ENCODE measurements at regions of chr1 and their contacts with region 1.

Region 1: DNA sequence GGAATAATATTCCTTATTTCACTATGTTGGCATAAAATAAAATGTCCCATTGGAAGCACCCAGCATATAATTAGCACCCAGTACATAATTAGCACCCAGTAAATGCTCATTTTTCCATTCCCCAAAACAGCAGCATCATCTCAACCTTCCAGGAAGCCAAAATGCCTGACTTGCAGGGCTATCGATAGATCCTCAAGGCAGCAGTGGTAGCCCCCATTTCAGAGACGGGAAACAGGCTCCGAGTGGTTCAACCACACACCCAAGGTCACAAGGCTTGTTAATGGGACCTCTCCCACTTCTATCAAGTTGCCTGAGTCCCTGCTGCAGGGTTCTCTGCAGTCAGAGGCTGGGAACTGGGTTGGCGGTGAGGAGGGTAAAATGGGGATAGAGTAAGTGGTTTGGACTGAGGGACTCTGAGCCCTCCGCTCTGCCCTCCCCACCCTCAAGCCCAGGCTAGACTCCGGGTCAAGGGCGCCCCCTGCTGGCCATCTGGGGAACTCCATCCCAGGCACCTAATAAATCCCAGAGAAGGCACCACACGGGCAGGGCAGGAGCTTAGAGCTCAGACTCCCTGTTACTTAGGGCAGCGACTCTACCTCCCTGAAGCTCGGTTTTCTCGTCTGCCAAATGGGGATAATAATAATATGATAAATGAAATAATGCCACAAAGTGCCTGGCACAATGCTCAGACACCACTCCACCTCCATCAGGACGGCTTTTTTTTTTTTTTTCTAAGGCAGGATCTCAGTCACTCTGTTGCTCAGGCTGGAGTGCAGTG is 21.9 kb upstream of the LAPTM5 start:
- DNase-seq: peak; percentile 97
- H3K4me3 ChIP-seq: no peak overlapping the region
- H3K27ac ChIP-seq: no peak overlapping the region
- H3K4me1 ChIP-seq: peaks cover 6 to 22% (median 11%) of the 10 kb centered on the region in 4 donors
- H3K27me3 ChIP-seq: peaks cover 0 to 8% (median 0%) of the 10 kb centered on the region in 4 donors
- CTCF ChIP-seq: peak; percentile 96 to 100 (median 97)
- EP300 ChIP-seq: no peak
- POLR2A ChIP-seq: no peak

Region 2: GRCh38 chr1:29230553-29231378 is 1548.7 kb before region 1 on chr1 and contains the start of gene MECR:
- intact Hi-C with region 1: loop called (anchors 10 kb)
- DNase-seq: peak; percentile 99
- H3K4me3 ChIP-seq: peak within 1 kb of the TSS; percentile 69 to 85 (median 84)
- H3K27ac ChIP-seq: peak within 1 kb of the TSS; percentile 77 to 87 (median 78)
- H3K4me1 ChIP-seq: peaks cover 10 to 24% (median 18%) of the 10 kb centered on the region in 4 donors
- H3K27me3 ChIP-seq: peaks cover 0 to 5% (median 0%) of the 10 kb centered on the region in 4 donors
- CTCF ChIP-seq: peak; percentile 12 to 39 (median 22)
- EP300 ChIP-seq: no peak
- POLR2A ChIP-seq: peak; percentile 11
- total RNA-seq, gene MECR: 15.4 to 20.2 (median 18.6) TPM

Region 3: GRCh38 chr1:30657759-30658253 is 121.7 kb before region 1 on chr1:
- intact Hi-C with region 1: no loop called
- DNase-seq: no peak
- H3K4me3 ChIP-seq: no peak overlapping the region
- H3K27ac ChIP-seq: no peak overlapping the region
- H3K4me1 ChIP-seq: no peaks in the 10 kb centered on the region
- H3K27me3 ChIP-seq: peaks cover 0 to 31% (median 3%) of the 10 kb centered on the region in 4 donors
- CTCF ChIP-seq: no peak
- EP300 ChIP-seq: no peak
- POLR2A ChIP-seq: no peak

Region 4: GRCh38 chr1:30718636-30719405 is 60.7 kb before region 1 on chr1:
- intact Hi-C with region 1: loop called (anchors 1 kb)
- DNase-seq: peak; percentile 96
- H3K4me3 ChIP-seq: peak overlapping the region; percentile 60 to 75 (median 68)
- H3K27ac ChIP-seq: peak overlapping the region; percentile 95 to 100 (median 100)
- H3K4me1 ChIP-seq: peaks cover 10 to 22% (median 17%) of the 10 kb centered on the region in 4 donors
- H3K27me3 ChIP-seq: no peaks in the 10 kb centered on the region
- CTCF ChIP-seq: peak in 2 of 3 experiments; percentile 97 to 99
- EP300 ChIP-seq: no peak
- POLR2A ChIP-seq: peak; percentile 59

Region 5: DNA sequence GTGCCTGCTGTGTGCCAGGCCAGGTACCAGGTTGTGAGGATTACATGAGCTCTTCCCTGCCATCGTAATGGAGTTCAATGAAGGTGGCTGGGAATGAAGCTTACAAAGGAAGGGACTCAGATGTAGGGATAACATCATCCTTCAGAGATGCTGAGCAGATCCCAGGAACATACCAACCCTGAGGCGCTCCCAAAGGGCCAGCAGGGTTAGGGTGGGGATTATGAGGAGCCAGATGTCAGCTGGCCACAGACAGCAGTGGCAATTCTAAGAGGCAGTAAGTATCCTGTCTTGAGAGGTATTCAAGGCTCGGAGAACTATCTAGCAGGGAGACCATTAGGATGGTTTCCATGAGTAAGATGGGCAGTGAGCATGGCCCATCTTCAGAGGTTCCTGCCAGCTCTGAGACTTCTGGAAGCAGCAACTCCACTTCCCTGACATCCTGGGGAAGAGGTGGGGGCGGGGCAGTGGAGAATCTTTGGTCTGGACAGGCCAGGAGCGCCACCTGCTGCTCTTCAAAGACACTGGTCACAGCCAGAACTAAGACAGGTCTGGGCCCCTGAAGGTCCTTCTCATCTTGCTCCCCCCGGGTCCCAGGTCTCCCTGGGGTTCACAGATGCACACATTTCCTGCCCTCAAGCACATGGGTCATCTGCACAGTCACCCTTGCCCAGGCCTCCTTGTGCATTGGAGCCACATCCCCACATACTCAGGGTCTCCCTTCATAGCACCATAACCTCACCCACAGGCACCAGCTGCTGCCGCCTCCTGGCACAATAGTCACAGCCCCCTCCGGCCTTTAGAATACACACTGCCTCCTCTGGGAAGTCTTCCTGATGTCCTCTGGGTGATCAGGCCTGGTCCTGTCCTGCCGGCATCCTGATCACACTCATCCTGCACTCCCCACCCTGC is 131.8 kb after region 1 on chr1:
- intact Hi-C with region 1: loop called (anchors 5 kb)
- DNase-seq: no peak
- H3K4me3 ChIP-seq: no peak overlapping the region
- H3K27ac ChIP-seq: peak overlapping the region in 3 of 4 donors; percentile 31 to 38 (median 32)
- H3K4me1 ChIP-seq: peaks cover 18 to 41% (median 40%) of the 10 kb centered on the region in 4 donors
- H3K27me3 ChIP-seq: no peaks in the 10 kb centered on the region
- CTCF ChIP-seq: peak; percentile 89 to 94 (median 93)
- EP300 ChIP-seq: no peak
- POLR2A ChIP-seq: no peak

Region 6: GRCh38 chr1:31084782-31085569 is 305.5 kb after region 1 on chr1:
- intact Hi-C with region 1: no loop called
- DNase-seq: no peak
- H3K4me3 ChIP-seq: no peak overlapping the region
- H3K27ac ChIP-seq: no peak overlapping the region
- H3K4me1 ChIP-seq: no peaks in the 10 kb centered on the region
- H3K27me3 ChIP-seq: no peaks in the 10 kb centered on the region
- CTCF ChIP-seq: no peak
- EP300 ChIP-seq: no peak
- POLR2A ChIP-seq: no peak

Measured in esophagus muscularis mucosa (tissue), 4 donors.